Heart left ventricle (tissue), 16 donors: ENCODE measurements at regions of chrX and their contacts with region 1.

Region 1: GRCh38 chrX:22021751-22022324 is 10.3 kb upstream of the PHEX start:
- DNase-seq: no peak
- ATAC-seq: no peak
- H3K4me3 ChIP-seq: no peak overlapping the region
- H3K27ac ChIP-seq: no peak overlapping the region
- H3K4me1 ChIP-seq: no peaks in the 10 kb centered on the region
- H3K27me3 ChIP-seq: no peaks in the 10 kb centered on the region
- CTCF ChIP-seq: no peak
- POLR2A ChIP-seq: no peak

Region 2: GRCh38 chrX:22081475-22082092 is 59.7 kb after region 1 on chrX:
- intact Hi-C with region 1: no loop called
- DNase-seq: peak; percentile 25 to 51 (median 46)
- ATAC-seq: peak in 2 of 4 donors; percentile 52 to 56
- H3K4me3 ChIP-seq: no peak overlapping the region
- H3K27ac ChIP-seq: no peak overlapping the region
- H3K4me1 ChIP-seq: no peaks in the 10 kb centered on the region
- H3K27me3 ChIP-seq: peaks cover 0 to 6% (median 0%) of the 10 kb centered on the region in 9 donors
- CTCF ChIP-seq: peak; percentile 33 to 72 (median 48)
- POLR2A ChIP-seq: no peak

Region 3: GRCh38 chrX:22424122-22424915 is 402.5 kb after region 1 on chrX:
- intact Hi-C with region 1: loop called in 1 of 10 experiments (anchors 10 kb)
- DNase-seq: no peak
- ATAC-seq: no peak
- H3K4me3 ChIP-seq: no peak overlapping the region
- H3K27ac ChIP-seq: no peak overlapping the region
- H3K4me1 ChIP-seq: no peaks in the 10 kb centered on the region
- H3K27me3 ChIP-seq: no peaks in the 10 kb centered on the region
- CTCF ChIP-seq: no peak
- POLR2A ChIP-seq: no peak